A549 (cell line): ENCODE measurements at regions of chr17 and their contacts with region 1.

Region 1: GRCh38 chr17:79393358-79394202 is 217.3 kb downstream of the RBFOX3 start:
- DNase-seq: peak; percentile 69 to 89
- ATAC-seq: peak; percentile 63 to 87
- H3K4me3 ChIP-seq: no peak overlapping the region
- H3K27ac ChIP-seq: no peak overlapping the region
- H3K4me1 ChIP-seq: no peaks in the 10 kb centered on the region
- CTCF ChIP-seq: peak; percentile 83
- EP300 ChIP-seq: no peak
- POLR2A ChIP-seq: no peak
- RAD21 ChIP-seq: peak; percentile 84 to 95

Region 2: DNA sequence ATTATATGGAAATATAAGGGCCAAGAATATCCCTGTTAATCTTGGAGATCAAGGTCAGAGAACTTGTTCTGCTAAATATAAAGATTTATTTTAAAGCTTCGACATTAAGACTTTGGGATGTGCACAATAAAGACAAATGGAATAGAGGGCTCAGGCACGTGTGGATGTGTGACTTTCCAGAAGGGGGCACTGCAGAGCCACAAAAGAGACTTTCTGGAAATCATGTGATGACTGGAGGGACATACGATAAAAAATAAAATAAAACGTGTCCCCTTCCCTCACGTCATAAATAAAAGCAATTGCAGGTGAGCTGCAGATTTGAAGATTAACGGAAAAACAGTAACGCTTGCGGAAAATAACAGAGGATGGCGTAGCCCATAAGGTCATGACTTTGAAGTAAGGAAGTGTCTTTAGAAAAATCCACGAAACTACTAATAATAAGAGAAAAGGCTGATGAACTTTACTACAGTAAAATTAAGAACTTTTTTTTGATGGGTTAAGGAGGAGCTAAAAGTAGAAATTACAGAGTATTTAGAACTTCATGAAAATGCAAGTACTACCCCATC is 328.4 kb before region 1 on chr17:
- CTCF ChIA-PET with region 1: interaction called, 16 read pairs
- POLR2A ChIA-PET with region 1: no interaction called
- DNase-seq: peak; percentile 57 to 73
- ATAC-seq: peak; percentile 64 to 81; a peak in 5 of 6 replicates
- H3K4me3 ChIP-seq: no peak overlapping the region
- H3K27ac ChIP-seq: no peak overlapping the region
- H3K4me1 ChIP-seq: no peaks in the 10 kb centered on the region
- CTCF ChIP-seq: peak; percentile 80
- EP300 ChIP-seq: no peak
- POLR2A ChIP-seq: no peak
- RAD21 ChIP-seq: peak; percentile 69 to 76

Region 3: GRCh38 chr17:79114458-79115301 is 278.9 kb before region 1 on chr17:
- CTCF ChIA-PET with region 1: interaction called, 20 read pairs
- POLR2A ChIA-PET with region 1: no interaction called
- DNase-seq: no peak
- ATAC-seq: no peak
- H3K4me3 ChIP-seq: no peak overlapping the region
- H3K27ac ChIP-seq: no peak overlapping the region
- H3K4me1 ChIP-seq: no peaks in the 10 kb centered on the region
- CTCF ChIP-seq: no peak
- EP300 ChIP-seq: no peak
- POLR2A ChIP-seq: no peak
- RAD21 ChIP-seq: no peak

Region 4: GRCh38 chr17:79201536-79202227 is 191.9 kb before region 1 on chr17:
- CTCF ChIA-PET with region 1: interaction called, 24 read pairs
- POLR2A ChIA-PET with region 1: no interaction called
- DNase-seq: peak; percentile 22 to 87
- ATAC-seq: peak; percentile 51 to 53; a peak in 5 of 6 replicates
- H3K4me3 ChIP-seq: no peak overlapping the region
- H3K27ac ChIP-seq: 0 out of 6 replicates have a peak overlapping the region, but pooled peaks of 1 of the 2 experiments have one; percentile 17
- H3K4me1 ChIP-seq: peaks cover 15% of the 10 kb centered on the region; the same call in 2 of the 3 replicates
- CTCF ChIP-seq: no peak
- EP300 ChIP-seq: no peak
- POLR2A ChIP-seq: no peak
- RAD21 ChIP-seq: no peak

Region 5: GRCh38 chr17:79354173-79354820 is 39.3 kb before region 1 on chr17:
- CTCF ChIA-PET with region 1: interaction called, 782 read pairs
- POLR2A ChIA-PET with region 1: no interaction called
- DNase-seq: no peak
- ATAC-seq: 0 out of 6 replicates have a peak, but pooled peaks of 1 of the 2 experiments have one; percentile 5
- H3K4me3 ChIP-seq: no peak overlapping the region
- H3K27ac ChIP-seq: no peak overlapping the region
- H3K4me1 ChIP-seq: no peaks in the 10 kb centered on the region
- CTCF ChIP-seq: no peak
- EP300 ChIP-seq: no peak
- POLR2A ChIP-seq: no peak
- RAD21 ChIP-seq: no peak

Region 6: GRCh38 chr17:79558091-79558895 is 164.7 kb after region 1 on chr17:
- CTCF ChIA-PET with region 1: no interaction called
- POLR2A ChIA-PET with region 1: no interaction called
- DNase-seq: no peak
- ATAC-seq: no peak
- H3K4me3 ChIP-seq: no peak overlapping the region
- H3K27ac ChIP-seq: peak overlapping the region; percentile 10 to 54; a peak in 3 of 6 replicates
- H3K4me1 ChIP-seq: peaks cover 35% of the 10 kb centered on the region
- CTCF ChIP-seq: no peak
- EP300 ChIP-seq: no peak
- POLR2A ChIP-seq: no peak
- RAD21 ChIP-seq: no peak

Region 7: DNA sequence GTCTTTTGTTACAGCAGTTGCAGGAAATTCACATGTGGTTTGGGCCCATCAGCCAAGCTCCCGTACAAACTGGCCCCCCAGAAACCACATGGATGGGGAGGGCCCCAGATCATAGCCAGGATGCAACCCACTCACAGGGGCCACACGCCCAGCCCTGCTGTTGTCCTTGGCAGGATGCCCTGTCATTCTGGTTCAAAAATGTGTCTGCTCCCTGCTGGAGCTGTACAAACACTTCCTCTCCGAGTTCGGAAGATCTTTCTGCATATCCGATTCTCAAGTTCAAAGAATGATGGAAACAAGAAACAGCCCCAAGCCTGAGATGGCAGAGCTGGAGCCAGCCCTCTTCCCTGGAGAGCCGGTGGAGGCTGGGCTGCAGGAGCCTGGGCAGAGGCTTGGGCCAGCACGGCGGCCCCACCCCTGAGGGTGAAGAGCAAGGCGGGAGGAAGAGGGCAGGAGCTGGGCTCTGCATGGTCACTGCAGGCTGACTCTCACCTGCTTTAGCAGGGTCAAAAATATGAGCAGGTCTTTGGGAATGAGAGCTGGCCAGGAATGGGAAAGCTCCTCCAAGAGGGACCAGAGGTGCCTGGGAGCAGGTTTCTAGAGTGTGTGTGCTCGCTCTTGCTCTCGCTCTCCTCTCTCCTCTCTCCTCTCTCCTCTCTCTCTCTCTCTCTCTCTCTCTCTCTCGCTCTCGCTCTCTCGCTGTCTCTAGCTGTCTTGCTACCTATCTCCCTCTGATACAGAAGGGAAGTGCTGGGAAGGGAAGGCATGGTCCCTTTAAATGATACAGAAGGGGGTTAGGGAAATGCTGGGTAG is 302.4 kb after region 1 on chr17:
- CTCF ChIA-PET with region 1: interaction called, 15 read pairs
- POLR2A ChIA-PET with region 1: no interaction called
- DNase-seq: no peak
- ATAC-seq: peak; percentile 22 to 65; a peak in 4 of 6 replicates
- H3K4me3 ChIP-seq: no peak overlapping the region
- H3K27ac ChIP-seq: peak overlapping the region; percentile 19 to 51; a peak in 5 of 6 replicates
- H3K4me1 ChIP-seq: peaks cover 35% of the 10 kb centered on the region
- CTCF ChIP-seq: no peak
- EP300 ChIP-seq: no peak
- POLR2A ChIP-seq: no peak
- RAD21 ChIP-seq: no peak